ENCODE measurements at regions of chr6 and their contacts with region 1.

Region 1: GRCh38 chr6:18323935-18324705 is 59.8 kb upstream of the DEK start:
- DNase-seq: peak; percentile 56
- CTCF ChIP-seq: peak; percentile 67

Region 2: GRCh38 chr6:18334251-18334650 is 10.1 kb after region 1 on chr6:
- CTCF ChIA-PET with region 1: interaction called, 20 read pairs
- POLR2A ChIA-PET with region 1: no interaction called
- DNase-seq: no peak
- CTCF ChIP-seq: no peak

Region 3: GRCh38 chr6:18503593-18504231 is 179.6 kb after region 1 on chr6:
- CTCF ChIA-PET with region 1: interaction called, 92 read pairs
- POLR2A ChIA-PET with region 1: no interaction called
- DNase-seq: peak; percentile 43
- CTCF ChIP-seq: peak; percentile 93

Region 4: GRCh38 chr6:18509871-18510643 is 185.9 kb after region 1 on chr6:
- CTCF ChIA-PET with region 1: interaction called, 92 read pairs
- POLR2A ChIA-PET with region 1: no interaction called
- DNase-seq: no peak
- CTCF ChIP-seq: no peak